GM12878 (cell line): ENCODE measurements at regions of chr1 and their contacts with region 1.

Region 1: DNA sequence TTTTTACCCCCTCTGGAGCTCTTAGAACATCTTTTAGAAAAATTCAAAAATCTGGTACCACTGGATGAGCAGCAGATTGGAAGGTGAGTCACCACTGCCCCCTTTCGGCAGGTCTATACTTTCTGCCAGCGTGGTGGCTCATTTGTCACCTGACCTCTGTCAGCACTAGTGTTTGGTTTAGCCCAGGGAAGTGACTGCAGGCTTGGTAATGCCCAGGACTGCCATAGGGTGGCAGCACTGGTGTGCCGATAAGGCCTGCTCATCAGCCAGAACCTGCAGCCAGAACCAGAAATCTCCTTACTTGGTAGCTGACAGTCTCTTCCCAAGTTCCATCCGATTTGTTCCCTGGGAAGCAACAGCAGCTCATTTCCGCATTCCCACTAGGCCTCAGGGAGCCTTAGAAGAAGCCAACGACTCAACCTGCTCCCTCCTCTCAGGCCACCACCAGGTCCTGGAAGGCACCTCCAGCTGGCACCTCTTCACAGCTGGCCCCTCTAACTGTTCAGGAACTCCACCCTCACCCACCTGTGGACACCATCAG is 6.8 kb downstream of the SMIM12 start:
- DNase-seq: peak; percentile 80
- ATAC-seq: peak; percentile 100
- H3K4me3 ChIP-seq: no peak overlapping the region
- H3K27ac ChIP-seq: no peak overlapping the region
- H3K4me1 ChIP-seq: no peaks in the 10 kb centered on the region
- H3K27me3 ChIP-seq: no peaks in the 10 kb centered on the region
- CTCF ChIP-seq: peak; percentile 92 to 99 (median 95)
- EP300 ChIP-seq: no peak
- POLR2A ChIP-seq: peak; percentile 19; the same call in 1 of the 2 replicates
- RAD21 ChIP-seq: peak; percentile 71

Region 2: GRCh38 chr1:34763142-34763781 is 89.5 kb before region 1 on chr1:
- CTCF ChIA-PET with region 1: no interaction called
- POLR2A ChIA-PET with region 1: no interaction called
- RAD21 ChIA-PET with region 1: no interaction called
- SMC1A ChIA-PET with region 1: no interaction called
- in situ Hi-C with region 1: no loop called
- intact Hi-C with region 1: no loop called
- DNase-seq: no peak
- ATAC-seq: no peak
- H3K4me3 ChIP-seq: no peak overlapping the region
- H3K27ac ChIP-seq: no peak overlapping the region
- H3K4me1 ChIP-seq: no peaks in the 10 kb centered on the region
- H3K27me3 ChIP-seq: no peaks in the 10 kb centered on the region; a peak in 1 of 4 replicates
- CTCF ChIP-seq: no peak
- EP300 ChIP-seq: no peak
- POLR2A ChIP-seq: no peak
- RAD21 ChIP-seq: no peak

Region 3: GRCh38 chr1:34786521-34787325 is 66.0 kb before region 1 on chr1:
- CTCF ChIA-PET with region 1: interaction called, 30 read pairs
- POLR2A ChIA-PET with region 1: no interaction called
- RAD21 ChIA-PET with region 1: interaction called, 8 read pairs
- SMC1A ChIA-PET with region 1: interaction called, 8 read pairs
- in situ Hi-C with region 1: loop called (anchors 5 kb)
- intact Hi-C with region 1: loop called (anchors 1 kb)
- DNase-seq: peak; percentile 25
- ATAC-seq: peak; percentile 96
- H3K4me3 ChIP-seq: no peak overlapping the region
- H3K27ac ChIP-seq: no peak overlapping the region
- H3K4me1 ChIP-seq: no peaks in the 10 kb centered on the region; the same call in 1 of the 2 replicates
- H3K27me3 ChIP-seq: 0 out of 4 replicates have a peak, but pooled peaks cover 0 to 4% of the 10 kb centered on the region in 2 experiments
- CTCF ChIP-seq: peak; percentile 85 to 96 (median 88); a peak in 5 of 6 replicates
- EP300 ChIP-seq: no peak
- POLR2A ChIP-seq: no peak
- RAD21 ChIP-seq: peak; percentile 71

Region 4: GRCh38 chr1:34865981-34866761 is 13.4 kb after region 1 on chr1:
- CTCF ChIA-PET with region 1: interaction called, 58 read pairs
- POLR2A ChIA-PET with region 1: interaction called, 4 read pairs
- RAD21 ChIA-PET with region 1: interaction called, 9 read pairs
- SMC1A ChIA-PET with region 1: interaction called, 9 read pairs
- in situ Hi-C with region 1: no loop called
- intact Hi-C with region 1: no loop called
- DNase-seq: peak; percentile 52
- ATAC-seq: peak; percentile 89
- H3K4me3 ChIP-seq: peak overlapping the region; percentile 61
- H3K27ac ChIP-seq: peak overlapping the region; percentile 67
- H3K4me1 ChIP-seq: peaks cover 4% of the 10 kb centered on the region; the same call in 1 of the 2 replicates
- H3K27me3 ChIP-seq: peaks cover 0 to 2% of the 10 kb centered on the region in 2 experiments; a peak in 1 of 4 replicates
- CTCF ChIP-seq: peak; percentile 92 to 96 (median 95)
- EP300 ChIP-seq: no peak
- POLR2A ChIP-seq: peak; percentile 83
- RAD21 ChIP-seq: peak; percentile 38; the same call in 1 of the 2 replicates

Region 5: DNA sequence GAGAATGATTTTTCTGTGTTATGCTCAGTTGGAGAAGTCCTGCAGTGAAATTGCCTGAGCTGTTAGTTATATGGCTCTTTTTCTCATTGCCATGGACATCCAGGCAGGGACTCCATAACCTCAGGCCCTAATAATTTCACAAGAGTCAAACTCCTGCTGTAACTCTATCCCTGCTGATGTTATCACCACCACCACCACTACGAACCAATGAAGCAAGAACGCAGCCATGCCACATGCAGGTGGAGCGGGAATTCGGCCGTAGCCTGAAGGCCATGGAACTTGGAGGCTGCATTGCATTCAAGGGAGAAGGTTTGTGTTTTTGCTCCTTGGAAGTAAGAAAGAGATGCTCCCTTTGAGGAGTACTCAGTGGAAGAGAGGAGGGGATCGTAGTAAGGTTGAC is 93.5 kb after region 1 on chr1:
- CTCF ChIA-PET with region 1: no interaction called
- POLR2A ChIA-PET with region 1: no interaction called
- RAD21 ChIA-PET with region 1: no interaction called
- SMC1A ChIA-PET with region 1: no interaction called
- in situ Hi-C with region 1: no loop called
- intact Hi-C with region 1: no loop called
- DNase-seq: no peak
- ATAC-seq: no peak
- H3K4me3 ChIP-seq: no peak overlapping the region
- H3K27ac ChIP-seq: no peak overlapping the region
- H3K4me1 ChIP-seq: no peaks in the 10 kb centered on the region
- H3K27me3 ChIP-seq: no peaks in the 10 kb centered on the region
- CTCF ChIP-seq: no peak
- EP300 ChIP-seq: no peak
- POLR2A ChIP-seq: no peak
- RAD21 ChIP-seq: no peak

Region 6: GRCh38 chr1:35180776-35181374 is 328.1 kb after region 1 on chr1:
- CTCF ChIA-PET with region 1: no interaction called
- POLR2A ChIA-PET with region 1: no interaction called
- RAD21 ChIA-PET with region 1: no interaction called
- SMC1A ChIA-PET with region 1: interaction called, 3 read pairs
- in situ Hi-C with region 1: no loop called
- intact Hi-C with region 1: loop called (anchors 10 kb)
- DNase-seq: no peak
- ATAC-seq: peak; percentile 5; the same call in 2 of the 3 replicates
- H3K4me3 ChIP-seq: no peak overlapping the region
- H3K27ac ChIP-seq: no peak overlapping the region
- H3K4me1 ChIP-seq: peaks cover 3% of the 10 kb centered on the region; the same call in 1 of the 2 replicates
- H3K27me3 ChIP-seq: no peaks in the 10 kb centered on the region
- CTCF ChIP-seq: no peak
- EP300 ChIP-seq: no peak
- POLR2A ChIP-seq: peak; percentile 68
- RAD21 ChIP-seq: no peak